Psoas muscle (tissue), 8 donors: ENCODE measurements at regions of chr20 and their contacts with region 1.

Region 1: GRCh38 chr20:63223221-63224207 is 7.6 kb upstream of the YTHDF1 start:
- DNase-seq: no peak
- ATAC-seq: peak; percentile 41 to 57 (median 54)
- H3K4me3 ChIP-seq: no peak overlapping the region
- H3K27ac ChIP-seq: no peak overlapping the region
- H3K4me1 ChIP-seq: no peaks in the 10 kb centered on the region
- H3K27me3 ChIP-seq: peaks cover 0 to 7% (median 2%) of the 10 kb centered on the region in 3 donors
- CTCF ChIP-seq: peak; percentile 64

Region 2: DNA sequence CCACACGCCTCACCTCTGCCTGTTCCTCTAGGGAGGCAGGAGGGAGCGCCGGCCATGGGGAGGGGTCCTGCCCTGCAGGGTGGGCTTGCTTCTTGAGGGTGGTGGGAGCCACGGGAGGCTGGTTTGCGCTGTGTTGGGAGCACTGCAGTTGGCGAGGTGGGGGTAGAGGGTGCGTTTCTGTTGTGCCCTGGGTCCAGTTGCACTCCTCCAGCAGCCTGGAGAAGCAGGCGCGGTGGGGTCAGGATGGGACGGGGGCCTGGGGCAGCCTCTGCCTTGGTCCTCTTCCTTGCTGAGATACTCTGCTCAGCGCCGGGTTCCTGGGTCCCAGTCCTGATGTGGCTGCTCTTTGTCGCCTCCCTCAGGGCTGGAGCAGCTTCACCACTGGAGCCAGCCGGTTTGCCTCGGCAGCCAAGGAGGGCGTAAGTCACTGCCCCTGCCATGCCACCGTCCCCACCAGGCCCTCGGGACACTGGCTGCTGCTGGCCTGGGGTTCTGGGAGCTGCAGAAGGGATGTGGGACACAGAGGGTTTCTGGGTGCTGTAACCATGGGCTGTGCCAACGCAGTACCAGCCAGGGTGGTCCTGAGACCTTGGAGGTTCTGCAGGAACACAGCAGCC is 57.5 kb after region 1 on chr20:
- intact Hi-C with region 1: loop called in 1 of 2 experiments (anchors 5 kb)
- DNase-seq: peak in 1 of 2 donors; percentile 8
- ATAC-seq: no peak
- H3K4me3 ChIP-seq: no peak overlapping the region
- H3K27ac ChIP-seq: no peak overlapping the region
- H3K4me1 ChIP-seq: no peaks in the 10 kb centered on the region
- H3K27me3 ChIP-seq: no peaks in the 10 kb centered on the region
- CTCF ChIP-seq: no peak